ENCODE measurements at regions of chr6 and their contacts with region 1.

Region 1: DNA sequence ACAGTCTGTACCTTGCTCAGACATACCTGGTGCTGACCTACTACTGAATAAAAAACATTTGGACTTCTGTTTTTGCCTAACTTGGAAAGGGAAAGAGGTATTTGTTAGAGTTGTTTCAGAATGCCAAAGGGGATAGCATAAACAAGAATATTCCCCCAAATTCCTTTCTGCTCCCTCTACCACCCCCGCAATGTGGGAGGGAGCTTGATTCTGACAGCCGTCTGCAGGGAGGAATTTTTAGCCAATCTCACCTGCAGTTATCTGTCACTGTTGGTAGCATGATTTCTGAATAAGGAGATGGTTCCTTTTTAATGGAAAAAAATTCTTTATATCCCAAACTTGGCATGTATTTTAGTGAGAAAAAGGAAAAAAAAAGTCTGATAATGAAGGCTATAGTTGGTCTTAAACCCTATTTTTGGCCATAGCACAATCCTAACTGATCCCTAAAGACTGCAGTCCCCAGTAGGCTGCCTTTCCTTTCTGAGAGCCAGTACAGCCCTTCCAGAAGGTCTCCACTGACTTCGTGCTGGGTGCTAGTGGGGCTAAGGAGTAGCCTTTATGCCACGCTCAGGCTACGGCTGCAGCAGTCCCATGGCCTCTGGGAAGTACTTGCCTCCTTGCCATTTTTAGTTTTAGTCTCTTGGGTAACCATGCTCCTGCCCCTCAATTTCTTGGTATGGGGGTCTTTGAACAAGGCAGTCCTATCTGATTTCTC is 13.6 kb upstream of the PDE7B start:
- DNase-seq: no peak
- ATAC-seq: no peak
- H3K4me3 ChIP-seq: no peak overlapping the region
- H3K27ac ChIP-seq: no peak overlapping the region
- H3K4me1 ChIP-seq: no peaks in the 10 kb centered on the region
- H3K27me3 ChIP-seq: 0 out of 2 replicates have a peak, but pooled peaks cover 2% of the 10 kb centered on the region
- CTCF ChIP-seq: no peak

Region 2: GRCh38 chr6:136069119-136069518 is 231.2 kb after region 1 on chr6:
- CTCF ChIA-PET with region 1: no interaction called
- POLR2A ChIA-PET with region 1: no interaction called
- in situ Hi-C with region 1: no loop called
- intact Hi-C with region 1: no loop called
- DNase-seq: no peak
- ATAC-seq: no peak
- H3K4me3 ChIP-seq: no peak overlapping the region
- H3K27ac ChIP-seq: no peak overlapping the region
- H3K4me1 ChIP-seq: no peaks in the 10 kb centered on the region
- H3K27me3 ChIP-seq: no peaks in the 10 kb centered on the region
- CTCF ChIP-seq: no peak

Region 3: DNA sequence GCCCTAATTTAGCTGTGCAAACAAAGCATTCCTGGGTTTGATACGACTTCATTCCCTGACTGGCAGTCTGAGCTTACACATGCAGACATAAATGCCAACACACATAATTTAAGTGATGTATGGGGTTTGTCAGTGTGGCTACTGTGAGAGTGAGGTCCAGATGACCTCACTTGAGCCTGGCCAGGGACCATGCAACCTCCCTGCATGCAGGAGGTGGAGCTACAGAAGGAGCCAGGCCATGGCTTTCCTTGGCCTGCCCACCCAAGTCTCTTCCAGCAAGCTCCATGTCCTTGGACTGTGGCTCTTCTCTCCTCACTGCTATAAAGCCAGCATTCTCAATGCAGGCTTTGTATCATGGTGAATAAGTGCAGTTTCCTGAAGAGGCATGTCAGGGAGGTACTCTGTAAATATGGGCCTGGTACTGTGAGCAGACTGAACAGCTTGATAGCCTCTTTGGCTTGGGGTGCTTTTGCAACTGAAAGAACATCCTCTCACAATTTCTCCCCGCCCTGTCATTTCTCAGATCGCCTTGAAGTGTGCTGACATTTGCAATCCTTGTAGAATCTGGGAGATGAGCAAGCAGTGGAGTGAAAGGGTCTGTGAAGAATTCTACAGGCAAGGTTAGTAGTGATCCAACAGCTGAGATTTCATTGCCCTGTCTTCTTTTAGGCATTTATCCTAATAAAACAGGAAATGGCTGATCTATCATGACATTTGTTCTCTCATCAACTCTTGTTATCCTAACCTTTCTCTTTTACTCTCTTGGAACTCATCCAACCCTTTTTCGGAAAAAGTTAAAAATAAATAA is 343.0 kb after region 1 on chr6:
- CTCF ChIA-PET with region 1: no interaction called
- POLR2A ChIA-PET with region 1: interaction called, 12 read pairs
- in situ Hi-C with region 1: no loop called
- intact Hi-C with region 1: no loop called
- DNase-seq: no peak
- ATAC-seq: no peak
- H3K4me3 ChIP-seq: no peak overlapping the region
- H3K27ac ChIP-seq: no peak overlapping the region
- H3K4me1 ChIP-seq: no peaks in the 10 kb centered on the region
- H3K27me3 ChIP-seq: no peaks in the 10 kb centered on the region
- CTCF ChIP-seq: no peak

Measured in Panc1 (cell line).